Aorta (tissue), 5 donors: ENCODE measurements at regions of chr20 and their contacts with region 1.

Region 1: DNA sequence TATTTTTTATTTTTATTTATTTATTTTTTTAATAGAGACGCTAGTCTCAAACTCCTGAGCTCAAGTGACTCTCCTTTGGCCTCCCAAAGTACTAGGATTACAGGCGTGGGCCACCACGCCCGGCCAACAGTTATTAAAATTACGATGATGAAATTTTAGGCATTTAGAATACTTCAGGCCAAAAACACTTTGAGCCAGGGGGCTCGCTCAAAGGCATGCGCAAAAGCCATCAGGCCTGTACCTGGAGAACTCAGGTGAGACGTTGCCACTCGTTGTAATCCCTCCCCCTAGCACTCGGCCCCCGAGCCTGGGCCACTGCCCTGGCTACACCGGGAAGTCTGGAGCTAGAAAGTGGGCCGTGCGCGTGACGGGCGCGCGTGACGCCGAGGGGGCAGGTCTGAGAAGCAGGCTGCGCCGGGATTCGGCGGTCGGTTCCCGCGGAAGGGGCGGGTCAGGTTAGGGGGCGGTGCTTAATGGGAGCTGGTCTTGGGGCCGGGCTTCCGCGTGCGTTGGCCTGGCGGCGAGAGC is 337 bp upstream of the CBFA2T2 start:
- DNase-seq: peak; percentile 100
- ATAC-seq: peak; percentile 99
- H3K4me3 ChIP-seq: peak overlapping the region in 1 of 2 donors; percentile 76
- H3K27ac ChIP-seq: peak overlapping the region in 1 of 2 donors; percentile 75
- H3K4me1 ChIP-seq: peaks cover 0 to 3% of the 10 kb centered on the region in 2 donors
- H3K27me3 ChIP-seq: no peaks in the 10 kb centered on the region

Region 2: GRCh38 chr20:33549229-33549999 is 59.9 kb after region 1 on chr20:
- intact Hi-C with region 1: loop called in 1 of 2 experiments (anchors 10 kb)
- DNase-seq: no peak
- ATAC-seq: no peak
- H3K4me3 ChIP-seq: no peak overlapping the region
- H3K27ac ChIP-seq: no peak overlapping the region
- H3K4me1 ChIP-seq: no peaks in the 10 kb centered on the region
- H3K27me3 ChIP-seq: no peaks in the 10 kb centered on the region

Region 3: DNA sequence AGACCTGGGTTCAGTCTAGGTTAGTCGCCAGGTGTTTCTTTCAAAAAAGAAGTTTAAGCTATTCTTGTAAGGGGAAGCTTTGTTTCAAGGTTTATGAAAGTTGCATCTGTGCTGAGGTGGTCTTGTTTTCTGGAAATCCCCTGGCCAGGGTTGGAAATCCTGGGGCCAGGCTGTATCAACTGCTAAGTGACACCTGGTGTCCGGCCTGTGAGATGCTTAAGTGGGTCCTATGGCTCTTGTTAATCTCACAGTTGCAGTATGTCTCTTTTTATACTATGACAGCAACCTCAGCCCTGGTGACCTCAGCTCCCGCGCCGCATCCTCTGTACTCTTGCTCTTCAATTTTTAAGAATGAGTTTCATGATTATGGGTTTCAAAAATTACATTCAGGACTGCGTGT is 393.6 kb after region 1 on chr20:
- intact Hi-C with region 1: no loop called
- DNase-seq: no peak
- ATAC-seq: no peak
- H3K4me3 ChIP-seq: no peak overlapping the region
- H3K27ac ChIP-seq: no peak overlapping the region
- H3K4me1 ChIP-seq: no peaks in the 10 kb centered on the region
- H3K27me3 ChIP-seq: no peaks in the 10 kb centered on the region